ENCODE measurements at regions of chr10 and their contacts with region 1.

Region 1: DNA sequence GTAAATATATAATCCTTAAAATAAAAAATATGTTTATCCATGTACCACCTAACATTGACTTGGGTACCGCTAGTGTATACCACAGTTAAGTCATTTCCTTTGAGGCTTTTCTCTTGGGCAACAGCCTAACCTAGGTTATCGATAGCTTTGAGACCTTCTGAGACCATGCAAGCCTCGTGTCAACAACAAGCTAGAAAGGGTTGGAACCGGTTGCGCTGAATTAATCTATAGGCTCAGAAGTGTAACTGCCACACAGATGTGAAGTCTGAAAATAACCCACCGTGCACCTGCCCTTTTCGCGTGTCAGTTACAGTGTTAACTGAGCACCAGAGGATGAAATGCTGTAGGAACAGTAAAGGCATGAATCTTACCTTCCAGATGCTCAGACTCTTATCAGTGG is 59.8 kb downstream of the ARID5B start:
- DNase-seq: peak; percentile 72
- ATAC-seq: peak; percentile 68
- H3K4me3 ChIP-seq: no peak overlapping the region
- H3K27ac ChIP-seq: peak overlapping the region; percentile 85
- H3K4me1 ChIP-seq: peaks cover 67% of the 10 kb centered on the region
- H3K27me3 ChIP-seq: no peaks in the 10 kb centered on the region
- CTCF ChIP-seq: no peak
- EP300 ChIP-seq: peak in 1 of 2 experiments; percentile 55; a peak in 1 of 4 replicates
- POLR2A ChIP-seq: peak; percentile 36; the same call in 1 of the 2 replicates
- RAD21 ChIP-seq: 0 out of 2 replicates have a peak, but pooled peaks have one; percentile 1

Region 2: DNA sequence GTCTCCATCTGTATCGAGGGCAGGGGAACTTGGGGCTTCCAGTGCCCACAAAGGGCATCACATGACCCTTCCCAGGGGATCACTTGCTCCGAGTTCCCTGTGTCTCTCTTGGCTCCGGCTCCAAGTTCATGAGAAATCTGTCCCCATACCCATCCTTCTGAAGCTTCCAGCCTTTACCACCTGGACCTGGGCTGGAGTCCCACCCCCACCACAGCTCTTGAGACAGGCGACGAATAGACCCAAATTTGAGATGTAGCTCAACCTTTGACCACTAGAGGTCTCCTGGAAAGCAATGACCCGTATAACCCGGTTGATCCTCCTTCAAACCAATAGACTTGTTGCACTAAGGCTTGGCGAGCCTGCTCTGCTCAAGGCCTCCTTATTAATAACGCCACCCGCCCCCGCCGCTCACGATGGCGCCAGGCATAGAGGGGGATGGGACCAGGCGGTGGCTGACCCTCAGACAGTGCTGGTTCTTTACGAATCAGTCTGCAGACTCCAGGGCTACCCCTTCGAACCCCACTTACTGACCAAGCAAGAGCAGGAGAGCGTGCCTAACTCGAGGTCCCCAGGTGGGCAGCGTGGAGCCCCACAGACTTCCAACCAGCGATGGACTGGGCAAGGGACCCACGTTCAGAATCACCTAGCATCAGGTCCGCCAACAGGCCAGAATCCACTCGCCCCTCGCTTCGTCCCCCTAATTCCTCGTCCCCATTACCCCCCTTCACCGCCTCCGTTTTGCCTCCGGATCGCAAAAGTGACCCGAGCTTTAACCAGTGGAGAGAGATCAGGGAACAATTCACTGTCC is 64.2 kb before region 1 on chr10:
- CTCF ChIA-PET with region 1: interaction called, 10 read pairs
- POLR2A ChIA-PET with region 1: no interaction called
- RAD21 ChIA-PET with region 1: interaction called, 4 read pairs
- SMC1A ChIA-PET with region 1: interaction called, 6 read pairs
- in situ Hi-C with region 1: no loop called
- intact Hi-C with region 1: no loop called
- DNase-seq: peak; percentile 85
- ATAC-seq: peak; percentile 79
- H3K4me3 ChIP-seq: no peak overlapping the region; the same call in 1 of the 2 replicates
- H3K27ac ChIP-seq: peak overlapping the region; percentile 57
- H3K4me1 ChIP-seq: peaks cover 28% of the 10 kb centered on the region
- H3K27me3 ChIP-seq: no peaks in the 10 kb centered on the region
- CTCF ChIP-seq: peak; percentile 76 to 86 (median 85)
- EP300 ChIP-seq: no peak
- POLR2A ChIP-seq: no peak
- RAD21 ChIP-seq: peak; percentile 79

Region 3: GRCh38 chr10:61943674-61944410 is 17.4 kb before region 1 on chr10:
- CTCF ChIA-PET with region 1: interaction called, 3 read pairs
- POLR2A ChIA-PET with region 1: interaction called, 7 read pairs
- RAD21 ChIA-PET with region 1: interaction called, 11 read pairs
- SMC1A ChIA-PET with region 1: interaction called, 10 read pairs
- in situ Hi-C with region 1: no loop called
- intact Hi-C with region 1: loop called (anchors 2 kb)
- DNase-seq: no peak
- ATAC-seq: peak; percentile 73
- H3K4me3 ChIP-seq: 0 out of 2 replicates have a peak overlapping the region, but pooled peaks have one; percentile 53
- H3K27ac ChIP-seq: peak overlapping the region; percentile 97
- H3K4me1 ChIP-seq: peaks cover 52% of the 10 kb centered on the region
- H3K27me3 ChIP-seq: no peaks in the 10 kb centered on the region
- CTCF ChIP-seq: peak in 1 of 3 experiments; percentile 11; a peak in 1 of 6 replicates
- EP300 ChIP-seq: peak in 1 of 2 experiments; percentile 63; a peak in 1 of 4 replicates
- POLR2A ChIP-seq: no peak
- RAD21 ChIP-seq: peak; percentile 42; the same call in 1 of the 2 replicates

Region 4: DNA sequence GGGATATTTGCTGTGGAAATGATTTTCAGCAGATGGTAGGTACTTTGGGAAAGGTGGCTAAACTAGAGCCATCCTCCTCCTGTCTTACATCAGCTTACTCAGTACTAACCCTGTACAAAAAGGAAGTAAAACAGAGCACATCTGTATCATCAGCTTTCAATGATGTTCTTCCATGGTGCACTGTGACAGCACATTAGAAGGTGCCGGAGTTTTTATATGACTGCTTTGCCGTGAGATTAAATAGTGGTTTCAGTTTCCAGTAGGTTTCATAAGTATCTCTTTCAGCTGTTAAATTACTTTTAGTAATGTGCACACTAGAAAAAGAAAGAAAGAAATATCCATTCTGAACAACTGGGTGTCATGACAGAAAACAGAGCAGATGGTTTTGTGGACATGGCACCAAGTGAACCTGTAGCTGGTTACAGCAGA is 26.7 kb after region 1 on chr10:
- CTCF ChIA-PET with region 1: interaction called, 5 read pairs
- POLR2A ChIA-PET with region 1: interaction called, 4 read pairs
- RAD21 ChIA-PET with region 1: interaction called, 4 read pairs
- SMC1A ChIA-PET with region 1: interaction called, 8 read pairs
- in situ Hi-C with region 1: no loop called
- intact Hi-C with region 1: loop called (anchors 1 kb)
- DNase-seq: peak; percentile 97
- ATAC-seq: peak; percentile 94
- H3K4me3 ChIP-seq: peak overlapping the region; percentile 36
- H3K27ac ChIP-seq: peak overlapping the region; percentile 98
- H3K4me1 ChIP-seq: peaks cover 45% of the 10 kb centered on the region
- H3K27me3 ChIP-seq: no peaks in the 10 kb centered on the region
- CTCF ChIP-seq: no peak
- EP300 ChIP-seq: peak; percentile 96 to 98
- POLR2A ChIP-seq: peak; percentile 48
- RAD21 ChIP-seq: no peak

Region 5: GRCh38 chr10:62000037-62000603 is 38.8 kb after region 1 on chr10:
- CTCF ChIA-PET with region 1: no interaction called
- POLR2A ChIA-PET with region 1: no interaction called
- RAD21 ChIA-PET with region 1: no interaction called
- SMC1A ChIA-PET with region 1: no interaction called
- in situ Hi-C with region 1: no loop called
- intact Hi-C with region 1: loop called (anchors 2 kb)
- DNase-seq: peak; percentile 90
- ATAC-seq: peak; percentile 86
- H3K4me3 ChIP-seq: peak overlapping the region; percentile 49
- H3K27ac ChIP-seq: peak overlapping the region; percentile 96
- H3K4me1 ChIP-seq: peaks cover 45% of the 10 kb centered on the region
- H3K27me3 ChIP-seq: no peaks in the 10 kb centered on the region
- CTCF ChIP-seq: no peak
- EP300 ChIP-seq: peak; percentile 100
- POLR2A ChIP-seq: peak; percentile 69
- RAD21 ChIP-seq: peak; percentile 15; the same call in 1 of the 2 replicates